Activated naive CD4-positive, alpha-beta T cell treated with anti-CD3 and anti-CD28 coated beads for 36 hours (primary cell): ENCODE measurements at regions of chrX and their contacts with region 1.

Region 1: DNA sequence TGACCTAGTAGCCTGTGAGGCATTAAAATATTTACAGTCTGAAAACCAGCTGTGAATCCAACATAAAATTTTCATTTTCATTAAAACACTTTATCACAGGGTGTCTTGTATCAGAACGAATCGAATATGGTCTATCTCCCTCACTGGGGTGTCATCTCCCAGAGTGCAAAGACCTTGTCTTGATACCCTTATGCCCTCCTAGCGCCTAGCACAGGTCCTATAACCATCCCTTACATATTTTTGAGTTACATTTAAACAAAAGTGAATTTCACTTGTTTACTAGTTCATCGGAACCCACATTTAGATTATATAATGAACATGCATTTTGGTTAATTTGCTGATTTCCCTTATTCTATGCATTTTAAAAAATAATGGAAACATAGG is 14.0 kb downstream of the DIPK2B start:
- DNase-seq: no peak
- H3K4me3 Mint-ChIP-seq: peak overlapping the region; percentile 77
- H3K27ac Mint-ChIP-seq: no peak overlapping the region
- H3K4me1 Mint-ChIP-seq: peaks cover 33% of the 10 kb centered on the region
- H3K27me3 Mint-ChIP-seq: no peaks in the 10 kb centered on the region

Region 2: GRCh38 chrX:44542567-44543325 is 643.9 kb before region 1 on chrX and contains the start of gene FUNDC1:
- CTCF ChIA-PET with region 1: no interaction called
- intact Hi-C with region 1: loop called (anchors 5 kb)
- DNase-seq: peak; percentile 94
- H3K4me3 Mint-ChIP-seq: peak within 1 kb of the TSS; percentile 84
- H3K27ac Mint-ChIP-seq: peak within 1 kb of the TSS; percentile 84
- H3K4me1 Mint-ChIP-seq: peaks cover 15% of the 10 kb centered on the region
- H3K27me3 Mint-ChIP-seq: no peaks in the 10 kb centered on the region
- total RNA-seq, gene FUNDC1: 11.9 to 12.8 TPM

Region 3: GRCh38 chrX:45007598-45007997 is 179.0 kb before region 1 on chrX:
- CTCF ChIA-PET with region 1: no interaction called
- intact Hi-C with region 1: loop called (anchors 10 kb)
- DNase-seq: no peak
- H3K4me3 Mint-ChIP-seq: no peak overlapping the region
- H3K27ac Mint-ChIP-seq: peak overlapping the region; percentile 66
- H3K4me1 Mint-ChIP-seq: peaks cover 49% of the 10 kb centered on the region
- H3K27me3 Mint-ChIP-seq: no peaks in the 10 kb centered on the region

Region 4: GRCh38 chrX:45070116-45071007 is 116.3 kb before region 1 on chrX:
- CTCF ChIA-PET with region 1: no interaction called
- intact Hi-C with region 1: loop called (anchors 5 kb)
- DNase-seq: peak; percentile 16
- H3K4me3 Mint-ChIP-seq: peak overlapping the region; percentile 39
- H3K27ac Mint-ChIP-seq: peak overlapping the region; percentile 80
- H3K4me1 Mint-ChIP-seq: peaks cover 54% of the 10 kb centered on the region
- H3K27me3 Mint-ChIP-seq: no peaks in the 10 kb centered on the region

Region 5: DNA sequence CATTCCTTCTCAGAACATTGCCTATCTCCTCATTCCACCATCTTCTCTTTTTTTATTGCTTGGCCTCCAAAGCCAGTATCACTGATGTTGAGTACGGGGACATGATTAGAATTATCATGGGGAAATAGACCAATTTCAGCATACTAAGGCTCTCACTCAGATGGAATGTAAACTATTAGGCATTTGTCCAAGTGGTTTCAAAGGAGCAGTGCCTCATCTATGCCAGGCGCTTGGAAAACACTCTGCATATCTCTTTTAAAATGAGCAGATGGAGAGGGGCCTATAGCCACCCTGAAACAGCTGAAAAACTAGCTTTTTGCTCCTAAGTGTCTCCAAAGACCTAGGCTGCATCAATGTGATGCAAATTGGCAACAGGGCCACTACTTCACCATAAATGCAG is 164.8 kb after region 1 on chrX:
- CTCF ChIA-PET with region 1: no interaction called
- intact Hi-C with region 1: no loop called
- DNase-seq: no peak
- H3K4me3 Mint-ChIP-seq: no peak overlapping the region
- H3K27ac Mint-ChIP-seq: no peak overlapping the region
- H3K4me1 Mint-ChIP-seq: no peaks in the 10 kb centered on the region
- H3K27me3 Mint-ChIP-seq: peaks cover 2% of the 10 kb centered on the region

Region 6: GRCh38 chrX:45445745-45446412 is 259.2 kb after region 1 on chrX:
- CTCF ChIA-PET with region 1: no interaction called
- intact Hi-C with region 1: loop called (anchors 5 kb)
- DNase-seq: no peak
- H3K4me3 Mint-ChIP-seq: no peak overlapping the region
- H3K27ac Mint-ChIP-seq: no peak overlapping the region
- H3K4me1 Mint-ChIP-seq: peaks cover 5% of the 10 kb centered on the region
- H3K27me3 Mint-ChIP-seq: no peaks in the 10 kb centered on the region

Region 7: DNA sequence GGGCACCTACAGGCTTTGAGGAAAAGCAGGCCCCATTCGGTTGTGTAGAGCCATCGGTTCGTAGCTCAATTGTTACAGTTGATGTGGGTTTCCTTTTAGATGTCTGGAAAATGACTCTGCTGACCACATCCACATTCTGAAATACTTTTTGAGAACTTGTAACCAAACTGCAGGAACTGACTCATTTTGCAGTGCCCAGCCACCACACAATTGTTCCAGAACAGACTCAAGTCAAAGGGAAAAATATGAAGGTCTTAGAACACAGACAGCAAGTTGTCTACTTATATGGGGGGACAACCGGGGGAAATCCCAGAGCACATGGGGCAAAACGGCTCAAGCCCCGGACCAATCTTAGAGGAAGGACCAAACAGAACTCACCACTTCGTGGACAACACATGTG is 571.7 kb after region 1 on chrX:
- CTCF ChIA-PET with region 1: no interaction called
- intact Hi-C with region 1: loop called (anchors 5 kb)
- DNase-seq: peak; percentile 70
- H3K4me3 Mint-ChIP-seq: peak overlapping the region; percentile 62
- H3K27ac Mint-ChIP-seq: peak overlapping the region; percentile 86
- H3K4me1 Mint-ChIP-seq: peaks cover 71% of the 10 kb centered on the region
- H3K27me3 Mint-ChIP-seq: no peaks in the 10 kb centered on the region